Dorsolateral prefrontal cortex (tissue), 120 donors: ENCODE measurements at regions of chr4 and their contacts with region 1.

Region 1: GRCh38 chr4:158722917-158723793 is at the start of gene PPID:
- DNase-seq: peak; percentile 76 to 91 (median 85)
- H3K4me3 ChIP-seq: peak within 1 kb of the TSS; percentile 66 to 100 (median 92)
- H3K27ac ChIP-seq: peak within 1 kb of the TSS; percentile 75 to 99 (median 96)
- H3K27me3 ChIP-seq: no peaks in the 10 kb centered on the region
- CTCF ChIP-seq: peak in 37 of 56 donors; percentile 9 to 62 (median 32)
- total RNA-seq, gene PPID: 18.4 to 71.3 (median 35.6) TPM

Region 2: DNA sequence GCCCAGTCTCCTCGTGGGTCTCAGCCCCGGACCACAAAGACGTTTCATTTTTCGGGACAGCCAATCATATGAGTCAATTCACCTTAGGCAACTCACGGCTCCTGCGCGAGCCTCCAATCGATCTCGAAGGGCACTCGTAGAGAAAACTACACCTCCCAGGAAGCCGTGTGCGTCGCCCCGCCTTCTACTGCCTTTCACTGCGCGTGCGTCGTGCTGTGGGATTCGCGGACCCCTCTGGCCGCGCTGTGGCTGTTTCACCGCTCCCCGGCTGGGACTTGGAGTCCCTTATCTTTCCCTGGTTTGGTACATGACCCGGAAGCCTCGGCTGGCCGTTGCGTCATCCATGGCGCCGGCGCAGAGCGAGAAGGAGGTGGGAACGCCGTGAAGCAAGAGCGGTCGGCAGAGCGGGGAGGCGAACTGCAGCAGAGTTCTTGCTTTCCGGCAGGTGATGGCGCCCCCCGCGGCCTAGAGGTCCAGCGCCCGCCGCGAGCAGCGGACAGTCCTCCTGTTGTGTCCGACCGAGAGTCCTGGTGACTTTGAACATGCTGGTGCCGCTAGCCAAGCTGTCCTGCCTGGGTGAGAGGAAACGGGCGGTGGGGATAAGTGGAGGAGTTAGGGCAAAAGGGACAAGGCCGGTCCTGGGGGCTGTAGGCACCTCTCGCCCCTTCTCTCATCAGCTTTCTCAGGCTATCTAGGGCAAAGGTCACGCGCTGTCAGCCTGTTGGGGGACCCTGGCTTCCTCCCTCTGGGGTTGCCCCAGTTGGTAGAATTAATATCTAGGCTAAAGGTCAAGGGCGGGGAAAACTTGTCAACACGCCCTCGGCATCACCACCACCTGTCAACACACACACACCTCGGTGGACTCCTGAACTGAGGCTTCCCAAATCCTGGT is 51.0 kb before region 1 on chr4 and contains the start of gene ETFDH:
- intact Hi-C with region 1: loop called (anchors 2 to 5 kb)
- DNase-seq: peak; percentile 96 to 99 (median 98)
- H3K4me3 ChIP-seq: peak within 1 kb of the TSS; percentile 62 to 99 (median 89)
- H3K27ac ChIP-seq: peak within 1 kb of the TSS; percentile 59 to 99 (median 95)
- H3K27me3 ChIP-seq: no peaks in the 10 kb centered on the region
- CTCF ChIP-seq: peak; percentile 51 to 93 (median 80)
- total RNA-seq, gene ETFDH: 22.9 to 50.5 (median 35.3) TPM

Region 3: GRCh38 chr4:159175085-159175988 is 452.2 kb after region 1 on chr4:
- intact Hi-C with region 1: loop called in 1 of 2 experiments (anchors 5 kb)
- DNase-seq: peak in 7 of 10 donors; percentile 54 to 75 (median 59)
- H3K4me3 ChIP-seq: peak overlapping the region in 56 of 59 donors; percentile 5 to 62 (median 36)
- H3K27ac ChIP-seq: peak overlapping the region in 46 of 59 donors; percentile 0 to 78 (median 46)
- H3K27me3 ChIP-seq: no peaks in the 10 kb centered on the region
- CTCF ChIP-seq: peak; percentile 57 to 96 (median 88)